ENCODE measurements at regions of chr10 and their contacts with region 1.

Region 1: DNA sequence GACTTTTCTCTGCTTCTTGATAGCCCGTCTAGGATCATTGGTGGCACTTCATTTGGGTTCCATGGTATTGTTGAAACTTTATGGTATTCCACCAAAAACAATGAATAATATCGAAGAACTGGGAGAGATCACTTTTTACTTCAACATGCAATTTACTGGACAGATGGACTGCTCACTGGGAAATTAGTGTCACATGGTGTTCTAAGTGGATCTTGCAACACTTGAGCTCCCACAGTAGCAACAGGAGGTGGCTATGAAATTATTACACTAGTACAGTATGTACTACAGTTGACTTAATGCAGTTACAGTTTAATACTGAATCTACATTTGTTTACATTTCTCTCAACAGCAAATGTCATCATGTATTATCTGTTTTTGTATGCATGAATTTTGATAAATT is 997.3 kb downstream of the REEP3 start:
- DNase-seq: no peak
- ATAC-seq: no peak
- H3K4me3 ChIP-seq: no peak overlapping the region
- H3K27ac ChIP-seq: no peak overlapping the region
- H3K4me1 ChIP-seq: no peaks in the 10 kb centered on the region
- H3K27me3 ChIP-seq: no peaks in the 10 kb centered on the region

Region 2: GRCh38 chr10:62831346-62831745 is 1687.1 kb before region 1 on chr10:
- intact Hi-C with region 1: no loop called
- DNase-seq: no peak
- ATAC-seq: no peak
- H3K4me3 ChIP-seq: no peak overlapping the region
- H3K27ac ChIP-seq: no peak overlapping the region
- H3K4me1 ChIP-seq: no peaks in the 10 kb centered on the region
- H3K27me3 ChIP-seq: no peaks in the 10 kb centered on the region

Region 3: DNA sequence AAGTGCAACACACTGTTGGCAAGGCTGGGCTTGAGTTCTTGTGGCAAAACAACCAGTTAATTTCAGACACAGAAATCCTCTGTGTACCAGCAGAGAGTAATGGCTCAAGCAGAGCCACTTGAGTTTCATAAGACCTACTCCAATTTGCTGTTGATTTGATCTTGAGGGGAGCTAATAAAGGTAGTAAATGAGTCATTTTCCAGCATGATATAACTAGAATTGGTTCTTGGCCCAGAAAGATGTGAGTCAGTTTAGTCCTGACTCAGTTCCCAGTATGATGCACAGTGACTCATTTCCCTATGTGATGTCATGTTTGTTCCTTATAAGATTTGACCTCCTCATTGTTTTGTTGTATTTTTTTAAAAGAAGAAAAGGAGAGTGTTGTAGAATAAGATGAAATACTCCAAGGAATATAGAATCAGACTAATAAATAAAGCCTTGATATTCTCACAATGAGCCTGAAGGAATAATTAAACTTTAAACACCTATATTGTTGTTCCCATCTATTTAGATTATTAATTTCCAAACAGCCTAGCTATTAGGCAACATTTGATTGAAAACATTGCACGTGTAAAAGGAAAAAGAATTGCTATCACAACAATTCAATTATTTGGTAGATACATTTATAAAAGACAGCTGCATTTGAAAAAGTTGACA is 811.1 kb before region 1 on chr10:
- intact Hi-C with region 1: no loop called
- DNase-seq: no peak
- ATAC-seq: peak; percentile 68 to 78
- H3K4me3 ChIP-seq: no peak overlapping the region
- H3K27ac ChIP-seq: peak overlapping the region; percentile 76
- H3K4me1 ChIP-seq: peaks cover 12% of the 10 kb centered on the region
- H3K27me3 ChIP-seq: no peaks in the 10 kb centered on the region

Region 4: DNA sequence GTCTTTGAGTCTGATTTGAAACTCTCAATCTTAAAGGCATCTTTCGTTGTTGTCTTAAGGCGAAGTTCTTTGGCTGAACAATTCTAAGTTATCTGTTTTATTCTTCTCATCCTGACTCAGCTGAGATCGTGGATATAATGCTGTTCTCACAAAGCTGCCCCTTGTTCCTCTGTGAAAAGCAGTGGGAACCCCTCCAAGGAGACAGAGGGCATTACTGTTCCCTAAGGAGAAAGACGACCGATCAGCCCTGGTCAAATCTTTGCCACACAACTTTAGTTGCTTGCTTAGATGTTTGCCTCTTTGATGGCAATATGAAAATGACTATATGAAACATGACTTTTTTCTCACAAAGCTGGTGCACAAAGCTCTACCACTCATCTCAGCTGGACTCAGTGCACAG is 19.5 kb after region 1 on chr10:
- intact Hi-C with region 1: loop called in 1 of 4 experiments (anchors 2 kb)
- DNase-seq: no peak
- ATAC-seq: no peak
- H3K4me3 ChIP-seq: no peak overlapping the region
- H3K27ac ChIP-seq: no peak overlapping the region
- H3K4me1 ChIP-seq: no peaks in the 10 kb centered on the region
- H3K27me3 ChIP-seq: no peaks in the 10 kb centered on the region